ENCODE measurements at regions of chr1 and their contacts with region 1.

Region 1: DNA sequence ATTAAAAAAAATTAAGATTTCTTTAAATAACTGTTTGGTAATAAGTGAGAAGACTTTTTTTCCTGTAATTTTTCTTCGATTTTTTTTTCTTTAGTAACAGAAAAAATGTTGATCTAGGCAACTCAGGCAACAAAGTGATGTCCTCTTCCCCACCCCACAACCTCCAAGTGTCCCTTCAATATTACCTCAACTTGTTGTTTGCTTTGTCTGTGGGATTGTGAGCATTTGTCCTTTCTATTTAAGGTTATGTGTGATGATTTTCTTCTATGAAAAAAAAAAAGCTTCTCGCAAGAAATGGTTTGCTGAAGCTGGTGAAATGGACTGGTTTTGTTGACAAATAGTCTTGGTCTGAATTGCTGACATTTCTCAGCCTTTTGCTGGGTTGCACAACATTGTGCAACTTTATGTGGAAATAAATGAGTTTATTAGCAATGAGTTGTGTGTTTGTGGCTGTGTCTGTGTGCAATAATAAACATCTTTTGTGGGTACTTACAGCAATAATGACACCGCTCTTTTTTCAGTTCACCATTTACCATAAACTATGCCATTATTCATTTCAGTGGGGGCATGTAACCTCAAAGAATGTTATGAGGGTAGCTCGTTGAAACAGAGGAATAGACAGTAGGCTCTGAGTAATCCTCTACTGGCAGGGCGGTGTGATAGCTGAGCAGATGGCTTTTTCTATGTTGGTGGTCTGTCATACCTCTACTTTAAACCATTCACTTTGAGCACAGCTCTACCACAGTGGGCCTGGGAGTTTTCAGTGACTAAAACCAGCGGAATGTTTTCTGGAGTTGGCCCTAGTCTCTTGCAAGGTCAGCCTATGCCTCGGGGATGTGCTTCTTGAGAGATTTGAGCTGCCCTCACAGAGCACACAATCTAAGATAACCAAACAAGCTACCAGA is 218.5 kb downstream of the HLX start:
- DNase-seq: no peak
- ATAC-seq: no peak
- H3K4me3 Mint-ChIP-seq: no peak overlapping the region
- H3K27ac Mint-ChIP-seq: no peak overlapping the region
- H3K4me1 Mint-ChIP-seq: peaks cover 24% of the 10 kb centered on the region
- H3K27me3 Mint-ChIP-seq: no peaks in the 10 kb centered on the region
- CTCF ChIP-seq: no peak

Region 2: DNA sequence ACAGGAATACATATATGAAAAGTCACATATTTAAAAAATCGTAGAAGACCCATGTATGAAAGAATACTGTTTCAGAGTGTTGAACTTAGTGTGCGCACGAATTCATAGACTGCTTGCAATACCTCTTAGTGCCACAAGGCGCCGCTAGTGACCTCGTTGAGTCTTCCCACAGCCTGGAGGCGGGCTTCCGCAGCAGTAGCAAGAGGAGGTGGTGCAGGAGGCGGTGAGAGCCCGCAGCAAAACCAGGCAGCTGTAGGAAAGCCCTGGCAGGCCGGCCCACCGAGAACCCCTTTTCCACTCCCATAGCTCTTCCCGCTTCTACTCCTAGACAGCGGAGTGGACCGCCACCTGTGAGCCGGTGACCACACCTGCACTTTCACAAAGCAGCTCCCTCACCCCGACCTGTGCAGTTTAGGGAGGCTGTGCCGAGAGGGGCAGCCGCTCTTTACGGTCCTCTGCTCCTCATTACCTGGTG is 287.5 kb before region 1 on chr1:
- CTCF ChIA-PET with region 1: interaction called, 3 read pairs
- POLR2A ChIA-PET with region 1: no interaction called
- intact Hi-C with region 1: loop called (anchors 10 kb)
- DNase-seq: peak; percentile 54
- ATAC-seq: peak; percentile 99
- H3K4me3 Mint-ChIP-seq: peak overlapping the region; percentile 55
- H3K27ac Mint-ChIP-seq: no peak overlapping the region
- H3K4me1 Mint-ChIP-seq: peaks cover 2% of the 10 kb centered on the region
- H3K27me3 Mint-ChIP-seq: peaks cover 4% of the 10 kb centered on the region
- CTCF ChIP-seq: peak; percentile 96

Region 3: GRCh38 chr1:220879076-220879508 is 218.6 kb before region 1 on chr1 and contains the start of gene HLX:
- CTCF ChIA-PET with region 1: interaction called, 21 read pairs
- POLR2A ChIA-PET with region 1: interaction called, 7 read pairs
- intact Hi-C with region 1: loop called (anchors 1 kb)
- DNase-seq: peak; percentile 75
- ATAC-seq: peak; percentile 80
- H3K4me3 Mint-ChIP-seq: peak within 1 kb of the TSS; percentile 94
- H3K27ac Mint-ChIP-seq: peak within 1 kb of the TSS; percentile 93
- H3K4me1 Mint-ChIP-seq: peaks cover 50% of the 10 kb centered on the region
- H3K27me3 Mint-ChIP-seq: peaks cover 2% of the 10 kb centered on the region
- CTCF ChIP-seq: no peak
- total RNA-seq, gene HLX: 3.2 and 4.6 TPM in 2 replicates

Region 4: DNA sequence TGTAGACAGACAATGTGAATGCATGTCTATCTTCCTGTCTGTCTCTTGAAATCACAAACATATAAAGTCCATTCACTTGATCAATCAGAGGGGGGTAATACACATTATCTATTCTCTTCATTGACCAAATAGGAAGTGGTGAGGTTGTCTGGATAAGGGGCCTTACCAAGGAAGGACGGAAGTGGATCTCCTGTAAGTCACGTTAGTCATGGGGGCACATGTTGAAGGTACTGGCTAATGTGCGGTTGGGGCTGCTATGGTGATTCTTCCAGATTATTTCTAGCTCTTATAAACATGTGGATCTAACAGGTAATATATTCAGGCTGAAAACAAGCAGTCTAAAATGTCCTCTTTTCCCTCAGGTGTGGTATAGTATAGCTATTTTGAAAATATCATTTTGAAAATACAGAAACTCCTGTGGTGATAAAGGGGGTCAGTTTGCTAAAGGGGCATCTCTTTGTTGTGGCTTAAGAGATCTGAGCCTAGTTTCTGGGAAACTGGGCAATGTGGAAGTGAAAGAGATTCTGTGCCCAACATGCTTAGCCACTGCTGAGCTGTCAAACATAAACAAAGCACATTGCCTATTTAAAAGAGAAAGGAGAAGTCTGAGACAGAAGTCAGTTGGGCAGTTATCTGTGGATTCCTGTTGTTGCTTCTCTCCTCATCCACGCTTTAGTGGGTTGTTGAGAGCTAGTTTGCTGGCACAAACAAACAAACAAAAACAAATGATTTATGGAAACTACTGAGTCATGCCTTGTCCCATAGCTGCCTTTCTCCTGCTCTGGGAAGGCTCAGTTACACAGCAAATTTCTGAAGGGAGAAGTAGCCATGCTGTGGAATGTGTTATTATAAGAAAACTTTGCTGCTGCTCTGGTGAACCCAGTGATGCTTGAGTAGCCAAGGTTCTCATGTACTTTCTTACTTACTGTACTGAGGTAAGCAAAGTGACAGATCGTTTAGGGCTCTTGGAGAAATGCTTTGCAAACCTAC is 51.6 kb before region 1 on chr1:
- CTCF ChIA-PET with region 1: no interaction called
- POLR2A ChIA-PET with region 1: interaction called, 3 read pairs
- intact Hi-C with region 1: loop called (anchors 2 kb)
- DNase-seq: no peak
- ATAC-seq: peak; percentile 90
- H3K4me3 Mint-ChIP-seq: peak overlapping the region; percentile 77
- H3K27ac Mint-ChIP-seq: peak overlapping the region; percentile 96
- H3K4me1 Mint-ChIP-seq: peaks cover 58% of the 10 kb centered on the region
- H3K27me3 Mint-ChIP-seq: no peaks in the 10 kb centered on the region
- CTCF ChIP-seq: no peak

Region 5: GRCh38 chr1:221141606-221142285 is 44.0 kb after region 1 on chr1:
- CTCF ChIA-PET with region 1: no interaction called
- POLR2A ChIA-PET with region 1: no interaction called
- intact Hi-C with region 1: loop called (anchors 5 kb)
- DNase-seq: no peak
- ATAC-seq: no peak
- H3K4me3 Mint-ChIP-seq: no peak overlapping the region
- H3K27ac Mint-ChIP-seq: no peak overlapping the region
- H3K4me1 Mint-ChIP-seq: peaks cover 5% of the 10 kb centered on the region
- H3K27me3 Mint-ChIP-seq: peaks cover 2% of the 10 kb centered on the region
- CTCF ChIP-seq: no peak

Region 6: DNA sequence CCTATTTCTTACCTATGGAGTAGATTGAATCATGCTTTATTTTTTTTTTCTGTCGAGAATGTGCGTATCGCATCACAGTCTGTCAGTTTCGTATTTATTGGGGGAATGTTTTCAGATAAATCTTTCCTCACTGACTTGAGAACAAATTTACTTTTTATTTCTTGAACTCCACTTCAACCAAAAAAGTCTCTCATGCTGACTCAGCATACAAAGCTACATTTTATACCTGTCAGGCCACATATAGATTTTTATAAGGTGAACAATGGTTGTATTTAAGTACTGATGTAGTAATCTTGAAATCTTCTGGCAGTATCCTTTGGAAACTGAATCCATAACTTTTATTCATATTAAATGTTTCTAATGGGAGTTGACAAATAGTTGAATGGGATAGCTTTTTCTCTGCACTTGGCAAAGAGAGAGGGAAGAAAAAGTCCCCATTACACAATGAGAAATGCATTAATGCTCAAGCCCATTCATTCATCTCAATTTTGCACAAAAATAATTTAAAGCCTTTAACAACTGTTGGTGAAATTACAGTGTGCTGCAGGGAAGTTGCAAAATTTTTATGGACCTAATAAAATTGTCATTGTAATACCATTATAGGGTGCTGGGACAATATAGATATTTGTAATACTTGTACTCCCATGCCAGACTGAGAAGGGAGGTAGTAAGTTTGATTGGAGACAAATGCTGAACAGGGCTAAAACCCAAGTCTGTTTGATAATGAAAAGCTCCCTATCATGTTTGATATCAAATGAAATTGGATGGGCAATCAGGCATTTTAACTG is 149.1 kb after region 1 on chr1:
- CTCF ChIA-PET with region 1: no interaction called
- POLR2A ChIA-PET with region 1: no interaction called
- intact Hi-C with region 1: no loop called
- DNase-seq: no peak
- ATAC-seq: no peak
- H3K4me3 Mint-ChIP-seq: no peak overlapping the region
- H3K27ac Mint-ChIP-seq: no peak overlapping the region
- H3K4me1 Mint-ChIP-seq: no peaks in the 10 kb centered on the region
- H3K27me3 Mint-ChIP-seq: peaks cover 6% of the 10 kb centered on the region
- CTCF ChIP-seq: no peak

Region 7: DNA sequence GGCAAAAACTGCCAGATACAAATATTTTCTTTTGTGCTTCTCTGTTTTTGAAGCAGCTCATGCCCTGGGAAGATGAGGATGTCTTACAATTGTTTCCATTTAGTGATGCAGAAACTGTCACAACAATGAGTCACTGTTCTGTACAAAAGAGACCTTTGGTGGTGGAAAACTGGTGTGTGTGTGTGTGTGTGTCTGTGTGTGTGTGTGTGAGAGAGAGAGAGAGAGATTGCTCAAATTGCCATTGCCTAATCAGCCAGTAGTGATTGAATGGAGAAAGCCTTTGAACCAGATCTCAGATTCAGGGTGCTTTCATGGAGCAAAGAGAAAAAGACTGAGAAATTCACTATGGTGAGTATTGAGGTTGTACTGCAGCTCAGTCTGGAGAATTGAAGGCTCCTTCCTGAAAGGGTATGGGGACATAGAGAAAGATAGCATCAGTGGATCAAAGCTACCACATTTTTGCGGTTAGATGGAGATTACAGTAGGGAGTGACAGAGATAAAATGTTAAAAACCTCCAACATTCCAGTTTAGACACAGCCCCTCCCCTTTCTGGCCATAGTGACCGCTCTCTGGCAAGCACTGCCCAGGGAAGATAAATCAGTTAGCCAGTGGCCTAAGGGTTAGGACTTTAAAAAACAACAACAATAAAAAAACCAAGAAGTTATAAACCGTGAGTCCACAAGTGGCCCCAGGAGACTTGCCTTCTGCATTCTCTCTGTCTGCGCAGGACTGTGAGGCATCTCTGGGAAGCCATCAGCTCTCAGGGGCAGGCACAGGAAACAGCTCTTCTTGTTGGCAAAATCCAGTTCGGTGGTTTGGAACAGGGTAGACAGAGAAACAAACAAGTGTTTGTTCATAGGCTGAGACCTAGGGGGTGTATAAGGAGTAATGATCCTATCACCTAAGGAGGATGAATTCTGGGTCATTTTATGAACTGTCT is 237.7 kb after region 1 on chr1:
- CTCF ChIA-PET with region 1: no interaction called
- POLR2A ChIA-PET with region 1: no interaction called
- intact Hi-C with region 1: no loop called
- DNase-seq: no peak
- ATAC-seq: no peak
- H3K4me3 Mint-ChIP-seq: no peak overlapping the region
- H3K27ac Mint-ChIP-seq: no peak overlapping the region
- H3K4me1 Mint-ChIP-seq: no peaks in the 10 kb centered on the region
- H3K27me3 Mint-ChIP-seq: peaks cover 4% of the 10 kb centered on the region
- CTCF ChIP-seq: no peak

Measured in activated B cell treated with CpG ODN at 0.5 μM for 24 hours (primary cell).